Dorsolateral prefrontal cortex (tissue), 120 donors: ENCODE measurements at regions of chr16 and their contacts with region 1.

Region 1: DNA sequence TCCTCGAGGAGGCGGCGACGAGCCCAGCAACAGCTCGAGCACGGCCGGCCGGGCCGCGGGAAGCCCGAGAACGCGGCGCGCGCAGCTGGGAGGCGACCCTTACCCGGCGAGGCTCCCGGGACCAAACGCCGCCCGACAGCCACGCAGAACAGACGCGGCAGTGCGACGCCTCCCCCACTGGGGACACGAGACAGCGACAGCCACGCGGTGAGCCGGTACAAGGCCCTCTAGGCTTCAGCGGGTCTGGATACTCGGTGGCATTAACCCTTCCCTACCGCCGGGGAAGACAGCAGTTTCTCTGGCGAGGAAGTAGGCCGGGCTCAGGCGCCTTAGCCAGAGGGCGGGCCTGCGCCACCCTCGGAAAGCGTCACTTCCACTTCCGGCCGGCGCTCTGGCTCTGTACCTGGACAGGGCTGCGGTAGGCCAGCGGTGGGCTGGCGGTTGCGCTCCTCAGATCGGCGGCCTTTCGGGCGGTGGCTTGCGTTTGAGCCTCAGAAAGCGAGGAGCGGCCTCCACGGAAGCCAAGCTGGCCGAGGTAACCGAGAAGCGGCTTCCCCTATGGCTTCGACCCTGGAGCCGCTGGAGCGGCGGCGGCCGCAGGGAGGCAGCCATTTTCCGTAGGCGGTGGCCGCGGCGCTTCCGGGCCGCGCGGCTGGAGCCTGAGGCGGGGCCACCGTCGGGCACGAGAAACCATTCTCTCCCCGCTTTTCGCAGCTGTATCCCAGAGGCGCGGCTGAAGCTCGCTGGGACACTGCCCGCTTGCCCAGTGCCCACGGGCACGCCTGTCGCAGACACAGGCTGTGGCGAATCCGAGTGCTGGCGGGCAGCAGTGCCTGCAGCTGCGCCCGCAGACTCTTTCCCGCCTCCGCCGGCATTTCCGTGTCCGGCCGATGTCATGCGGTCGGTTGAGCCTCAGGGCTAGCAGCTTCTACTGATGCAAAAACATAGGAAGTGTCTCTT is at the starts of genes TIGD7 and ZNF75A:
- DNase-seq: peak; percentile 87 to 97 (median 95)
- H3K4me3 ChIP-seq: peak within 1 kb of the TSS; percentile 61 to 97 (median 89)
- H3K27ac ChIP-seq: peak within 1 kb of the TSS; percentile 62 to 98 (median 94)
- H3K27me3 ChIP-seq: no peaks in the 10 kb centered on the region
- CTCF ChIP-seq: peak in 50 of 56 donors; percentile 2 to 69 (median 44)
- total RNA-seq, gene TIGD7: 7.4 to 20.6 (median 12.1) TPM
- total RNA-seq, gene ZNF75A: 22.2 to 53.5 (median 37.5) TPM

Region 2: GRCh38 chr16:3234543-3235541 is 70.5 kb before region 1 on chr16 and contains the start of gene ZNF200:
- intact Hi-C with region 1: loop called in 1 of 2 experiments (anchors 5 kb)
- DNase-seq: peak; percentile 95 to 97 (median 95)
- H3K4me3 ChIP-seq: peak within 1 kb of the TSS; percentile 66 to 100 (median 93)
- H3K27ac ChIP-seq: peak within 1 kb of the TSS; percentile 88 to 100 (median 98)
- H3K27me3 ChIP-seq: no peaks in the 10 kb centered on the region
- CTCF ChIP-seq: peak in 24 of 56 donors; percentile 11 to 51 (median 28)
- total RNA-seq, gene ZNF200: 3.7 to 13.3 (median 8.7) TPM

Region 3: GRCh38 chr16:3282730-3283524 is 22.5 kb before region 1 on chr16 and contains the start of gene ZNF263:
- intact Hi-C with region 1: loop called (anchors 1 kb)
- DNase-seq: peak; percentile 90 to 98 (median 96)
- H3K4me3 ChIP-seq: peak within 1 kb of the TSS; percentile 64 to 100 (median 98)
- H3K27ac ChIP-seq: peak within 1 kb of the TSS; percentile 91 to 100 (median 99)
- H3K27me3 ChIP-seq: peaks cover 0 to 2% (median 0%) of the 10 kb centered on the region in 45 donors
- CTCF ChIP-seq: peak in 26 of 56 donors; percentile 5 to 32 (median 18)
- total RNA-seq, gene ZNF263: 20.2 to 37.2 (median 28.3) TPM

Region 4: GRCh38 chr16:3400779-3401688 is 95.6 kb after region 1 on chr16 and contains the starts of genes ZNF174 and ZSCAN32:
- intact Hi-C with region 1: loop called (anchors 2 to 5 kb)
- DNase-seq: peak; percentile 98 to 99 (median 99)
- H3K4me3 ChIP-seq: peak within 1 kb of the TSS; percentile 72 to 100 (median 93)
- H3K27ac ChIP-seq: peak within 1 kb of the TSS in 57 of 59 donors; percentile 30 to 93 (median 81)
- H3K27me3 ChIP-seq: no peaks in the 10 kb centered on the region
- CTCF ChIP-seq: peak in 52 of 56 donors; percentile 12 to 76 (median 52)
- total RNA-seq, gene ZNF174: 10.1 to 18.8 (median 14.4) TPM
- total RNA-seq, gene ZSCAN32: 6.9 to 23.5 (median 13.2) TPM

Region 5: DNA sequence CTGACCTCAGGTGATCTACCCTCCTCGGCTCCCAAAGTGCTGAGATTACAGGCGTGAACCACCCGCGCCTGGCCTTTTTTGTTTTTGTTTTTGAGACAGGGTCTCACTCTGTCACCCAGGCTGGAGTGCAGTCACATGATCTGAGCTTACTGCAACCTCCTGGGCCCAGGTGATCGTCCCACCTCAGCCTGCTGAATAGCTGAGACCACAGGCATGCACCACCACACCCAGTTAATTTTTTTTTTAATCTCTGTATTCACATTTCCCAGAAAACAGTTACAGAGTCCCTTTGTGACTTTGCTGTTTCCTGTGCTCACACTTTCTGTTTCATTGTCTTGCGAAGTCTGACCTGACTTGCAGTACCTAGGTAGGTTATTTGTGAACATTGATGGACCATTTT is 198.1 kb after region 1 on chr16:
- intact Hi-C with region 1: loop called (anchors 1 to 5 kb)
- DNase-seq: peak in 1 of 10 donors; percentile 12
- H3K4me3 ChIP-seq: no peak overlapping the region
- H3K27ac ChIP-seq: no peak overlapping the region
- H3K27me3 ChIP-seq: no peaks in the 10 kb centered on the region
- CTCF ChIP-seq: no peak